Activated B cell treated with CpG ODN at 0.5 μM for 24 hours (primary cell): ENCODE measurements at regions of chr9 and their contacts with region 1.

Region 1: GRCh38 chr9:74277532-74277931 is 219.6 kb upstream of the RORB start:
- DNase-seq: no peak
- ATAC-seq: peak; percentile 25
- H3K4me3 Mint-ChIP-seq: no peak overlapping the region
- H3K27ac Mint-ChIP-seq: no peak overlapping the region
- H3K4me1 Mint-ChIP-seq: peaks cover 2% of the 10 kb centered on the region
- H3K27me3 Mint-ChIP-seq: no peaks in the 10 kb centered on the region
- CTCF ChIP-seq: no peak

Region 2: GRCh38 chr9:74218385-74219063 is 59.0 kb before region 1 on chr9:
- CTCF ChIA-PET with region 1: no interaction called
- POLR2A ChIA-PET with region 1: no interaction called
- intact Hi-C with region 1: loop called (anchors 10 kb)
- DNase-seq: no peak
- ATAC-seq: no peak
- H3K4me3 Mint-ChIP-seq: no peak overlapping the region
- H3K27ac Mint-ChIP-seq: no peak overlapping the region
- H3K4me1 Mint-ChIP-seq: no peaks in the 10 kb centered on the region
- H3K27me3 Mint-ChIP-seq: no peaks in the 10 kb centered on the region
- CTCF ChIP-seq: no peak